MCF 10A (cell line): ENCODE measurements at regions of chr14 and their contacts with region 1.

Region 1: DNA sequence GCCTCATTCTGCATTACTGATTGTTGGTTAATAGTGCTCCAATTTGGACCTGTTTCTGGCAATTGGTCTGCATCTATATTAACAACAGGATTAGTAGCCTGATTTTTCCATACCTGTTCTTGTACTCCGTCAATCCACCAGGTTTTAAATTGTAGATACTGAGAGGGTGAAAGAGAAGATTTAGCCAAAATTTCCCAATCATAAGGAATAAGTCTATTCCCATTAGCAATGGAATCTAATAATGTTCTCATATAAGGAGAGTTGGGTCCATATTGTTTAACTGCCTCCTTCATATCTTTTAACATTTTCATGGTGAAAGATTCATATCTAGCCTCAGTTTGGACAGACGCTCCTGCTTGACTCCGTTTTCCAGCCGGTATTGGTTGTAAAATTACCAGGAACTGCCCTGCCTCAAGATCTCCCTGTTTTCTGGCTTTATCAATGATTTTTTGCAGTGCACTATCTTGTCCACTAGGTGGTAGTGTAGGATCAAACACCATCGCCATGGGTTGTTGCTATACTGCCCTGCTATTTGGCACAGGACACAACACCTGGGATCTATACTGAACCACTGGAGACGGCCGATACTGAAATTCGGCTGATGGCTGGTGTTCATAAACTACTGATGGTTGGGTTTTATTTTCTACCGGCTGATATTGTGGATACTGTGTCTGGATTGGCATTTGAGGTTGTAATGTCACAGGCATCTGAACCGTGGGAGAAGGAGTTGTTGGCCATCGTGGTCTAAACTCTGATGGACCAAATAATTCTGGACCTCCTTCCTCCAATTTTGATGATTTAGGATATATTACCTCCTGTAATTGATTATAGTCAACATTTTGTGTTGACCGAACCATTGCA is 25.2 kb downstream of the DHRS4L2 start:
- DNase-seq: peak; percentile 83
- H3K4me3 Mint-ChIP-seq: no peak overlapping the region
- H3K27ac Mint-ChIP-seq: no peak overlapping the region
- H3K4me1 Mint-ChIP-seq: no peaks in the 10 kb centered on the region
- H3K27me3 Mint-ChIP-seq: peaks cover 20% of the 10 kb centered on the region
- CTCF ChIP-seq: peak; percentile 80

Region 2: DNA sequence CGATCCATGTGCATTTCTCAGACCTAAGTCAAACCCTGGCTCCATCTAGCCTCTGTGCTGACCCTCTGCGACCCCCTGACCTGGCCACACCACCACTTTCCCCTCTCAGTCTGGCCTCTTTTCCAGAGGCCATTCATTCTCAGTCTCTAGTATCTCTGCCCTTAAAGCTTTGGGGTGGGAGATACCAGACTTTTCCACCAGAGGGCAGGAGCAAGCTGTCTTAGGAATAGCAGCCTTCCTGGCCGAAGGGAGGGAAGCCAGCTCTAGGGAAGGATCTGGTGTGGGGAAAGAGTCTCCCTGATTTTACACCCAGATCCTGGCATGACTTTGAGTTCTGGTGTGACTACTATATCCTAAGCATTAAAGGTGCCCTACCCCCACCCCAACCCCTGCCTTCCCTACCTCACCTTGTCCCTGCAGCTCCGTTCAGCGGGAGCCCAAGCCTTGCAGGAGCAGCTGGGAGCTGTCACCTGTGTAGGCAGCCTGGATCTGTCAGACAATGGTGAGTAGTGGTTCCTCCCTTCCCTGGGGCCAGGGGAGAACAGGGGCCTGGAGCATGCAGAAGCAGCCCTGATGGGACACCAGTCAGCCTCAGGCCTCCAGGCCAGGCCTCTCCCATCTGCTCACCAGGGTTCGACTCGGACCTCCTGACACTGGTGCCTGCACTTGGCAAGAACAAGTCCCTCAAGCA is 44.5 kb after region 1 on chr14:
- CTCF ChIA-PET with region 1: interaction called, 5 read pairs
- POLR2A ChIA-PET with region 1: no interaction called
- intact Hi-C with region 1: loop called (anchors 2 kb)
- DNase-seq: peak; percentile 66
- H3K4me3 Mint-ChIP-seq: no peak overlapping the region
- H3K27ac Mint-ChIP-seq: no peak overlapping the region
- H3K4me1 Mint-ChIP-seq: peaks cover 4% of the 10 kb centered on the region
- H3K27me3 Mint-ChIP-seq: peaks cover 48% of the 10 kb centered on the region
- CTCF ChIP-seq: peak; percentile 49

Region 3: GRCh38 chr14:24271134-24271833 is 257.4 kb after region 1 on chr14 and contains the start of gene RABGGTA:
- CTCF ChIA-PET with region 1: no interaction called
- POLR2A ChIA-PET with region 1: no interaction called
- intact Hi-C with region 1: no loop called
- DNase-seq: peak; percentile 88
- H3K4me3 Mint-ChIP-seq: peak within 1 kb of the TSS; percentile 89
- H3K27ac Mint-ChIP-seq: peak within 1 kb of the TSS; percentile 16
- H3K4me1 Mint-ChIP-seq: peaks cover 43% of the 10 kb centered on the region
- H3K27me3 Mint-ChIP-seq: no peaks in the 10 kb centered on the region
- CTCF ChIP-seq: peak; percentile 67
- total RNA-seq, gene RABGGTA: 51.7 and 75.0 TPM in 2 replicates